ENCODE measurements at regions of chr5 and their contacts with region 1.

Region 1: DNA sequence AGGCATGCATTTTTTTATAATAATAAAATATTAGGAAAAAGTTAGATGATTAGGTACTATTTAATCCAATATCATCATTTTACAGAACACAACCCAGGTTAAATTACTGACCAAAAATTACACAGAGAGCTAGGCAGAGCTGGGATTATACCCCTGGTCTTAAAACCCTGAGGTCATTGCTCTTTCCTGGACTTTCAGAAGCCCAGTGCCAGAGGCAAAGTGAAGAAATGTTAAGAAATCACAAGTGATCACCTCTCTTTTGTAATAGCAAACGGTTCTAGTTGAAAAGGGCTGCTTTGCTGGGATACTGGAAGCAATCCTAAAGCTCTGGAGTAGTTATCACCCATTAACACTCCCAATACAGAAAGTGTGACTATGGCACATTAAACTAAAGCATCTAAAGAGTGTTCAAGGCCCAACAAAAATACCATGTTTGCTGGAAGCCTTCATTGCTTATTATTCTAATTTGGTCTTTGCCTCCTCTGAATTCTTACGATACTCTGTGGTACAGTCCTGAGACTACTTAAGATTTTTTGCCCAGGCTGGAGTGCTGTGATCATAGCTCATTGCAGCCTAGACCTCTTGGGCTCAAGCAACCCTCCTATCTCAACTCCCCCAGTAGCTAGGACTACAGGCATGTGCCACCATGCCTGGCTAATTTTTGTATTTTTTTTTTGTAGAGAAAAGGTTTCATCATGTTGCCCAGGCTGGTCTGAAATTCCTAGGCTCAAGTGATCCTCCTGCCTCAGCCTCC is 575.9 kb downstream of the RAB3C start:
- DNase-seq: no peak
- H3K4me3 ChIP-seq: no peak overlapping the region
- H3K27ac ChIP-seq: no peak overlapping the region
- H3K4me1 ChIP-seq: peaks cover 5% of the 10 kb centered on the region
- CTCF ChIP-seq: no peak

Region 2: DNA sequence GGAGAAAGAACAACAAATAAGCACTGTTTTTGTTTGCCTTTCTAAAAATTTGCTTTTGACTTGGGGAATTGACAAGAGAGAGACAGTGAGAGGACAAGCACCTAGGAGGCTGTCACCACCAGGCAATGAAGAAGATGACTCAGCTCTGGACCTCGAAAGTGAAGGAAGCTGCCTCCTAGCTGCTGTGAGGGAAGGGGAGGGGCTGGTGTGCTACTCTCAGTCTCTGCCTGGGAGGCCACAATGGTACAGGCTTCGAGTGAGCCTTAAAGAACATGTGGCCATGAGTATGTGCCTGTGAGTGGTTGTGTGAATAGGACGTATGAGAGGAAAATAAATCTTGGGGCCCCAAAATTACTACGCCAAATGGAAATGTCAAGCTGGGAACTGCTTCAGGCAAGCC is 691.9 kb before region 1 on chr5:
- CTCF ChIA-PET with region 1: no interaction called
- POLR2A ChIA-PET with region 1: no interaction called
- intact Hi-C with region 1: no loop called
- DNase-seq: no peak
- H3K4me3 ChIP-seq: no peak overlapping the region
- H3K27ac ChIP-seq: no peak overlapping the region
- H3K4me1 ChIP-seq: no peaks in the 10 kb centered on the region
- CTCF ChIP-seq: no peak

Region 3: GRCh38 chr5:59126708-59127573 is 31.9 kb before region 1 on chr5:
- CTCF ChIA-PET with region 1: no interaction called
- POLR2A ChIA-PET with region 1: interaction called, 10 read pairs
- intact Hi-C with region 1: no loop called
- DNase-seq: no peak
- H3K4me3 ChIP-seq: peak overlapping the region; percentile 44
- H3K27ac ChIP-seq: no peak overlapping the region
- H3K4me1 ChIP-seq: peaks cover 6% of the 10 kb centered on the region
- CTCF ChIP-seq: no peak

Region 4: GRCh38 chr5:59312223-59312622 is 153.4 kb after region 1 on chr5:
- CTCF ChIA-PET with region 1: no interaction called
- POLR2A ChIA-PET with region 1: no interaction called
- intact Hi-C with region 1: no loop called
- DNase-seq: no peak
- H3K4me3 ChIP-seq: no peak overlapping the region
- H3K27ac ChIP-seq: no peak overlapping the region
- H3K4me1 ChIP-seq: no peaks in the 10 kb centered on the region
- CTCF ChIP-seq: no peak

Measured in OCI-LY7 (cell line).